Activated CD8-positive, alpha-beta T cell treated with anti-CD3 and anti-CD28 coated beads, Interleukin-2, amount 10 ng/mL, durations not matched to agents 7 days and 5 days (primary cell): ENCODE measurements at regions of chr1 and their contacts with region 1.

Region 1: GRCh38 chr1:28458237-28459228 is 47.3 kb upstream of the RCC1 start:
- DNase-seq: no peak
- ATAC-seq: no peak
- H3K4me3 Mint-ChIP-seq: no peak overlapping the region
- H3K27ac Mint-ChIP-seq: no peak overlapping the region
- H3K4me1 Mint-ChIP-seq: peaks cover 12% of the 10 kb centered on the region
- H3K27me3 Mint-ChIP-seq: no peaks in the 10 kb centered on the region

Region 2: GRCh38 chr1:28613175-28613574 is 154.6 kb after region 1 on chr1:
- CTCF ChIA-PET with region 1: no interaction called
- POLR2A ChIA-PET with region 1: interaction called, 12 read pairs
- DNase-seq: no peak
- ATAC-seq: no peak
- H3K4me3 Mint-ChIP-seq: no peak overlapping the region
- H3K27ac Mint-ChIP-seq: no peak overlapping the region
- H3K4me1 Mint-ChIP-seq: no peaks in the 10 kb centered on the region
- H3K27me3 Mint-ChIP-seq: no peaks in the 10 kb centered on the region